Heart right ventricle (tissue), 16 donors: ENCODE measurements at regions of chr18 and their contacts with region 1.

Region 1: GRCh38 chr18:30465096-30465495 is 577.4 kb downstream of the DSC3 start:
- DNase-seq: no peak
- ATAC-seq: no peak
- H3K4me3 ChIP-seq: no peak overlapping the region
- H3K27ac ChIP-seq: no peak overlapping the region
- H3K4me1 ChIP-seq: no peaks in the 10 kb centered on the region
- H3K27me3 ChIP-seq: no peaks in the 10 kb centered on the region
- CTCF ChIP-seq: no peak

Region 2: DNA sequence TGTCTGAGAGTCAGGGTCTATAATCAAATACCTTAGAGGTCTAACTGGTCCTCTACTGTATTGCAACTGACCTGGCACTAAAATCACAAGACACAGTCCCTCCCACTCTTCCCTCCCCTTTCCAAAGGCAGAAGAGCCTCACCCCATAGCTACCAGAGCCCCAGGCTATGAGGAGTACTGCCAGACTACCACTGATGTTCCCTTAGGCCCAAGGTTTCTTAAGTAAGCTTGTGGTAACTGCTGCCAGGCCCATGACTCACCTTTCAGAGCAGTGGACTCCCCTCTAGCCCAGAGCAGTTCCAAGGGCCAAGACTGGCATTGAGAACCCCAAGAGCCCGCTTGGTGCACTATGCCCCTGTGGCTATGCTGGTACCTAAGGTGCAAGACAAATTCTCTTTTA is 616.0 kb before region 1 on chr18:
- intact Hi-C with region 1: no loop called
- DNase-seq: no peak
- ATAC-seq: no peak
- H3K4me3 ChIP-seq: no peak overlapping the region
- H3K27ac ChIP-seq: no peak overlapping the region
- H3K4me1 ChIP-seq: no peaks in the 10 kb centered on the region
- H3K27me3 ChIP-seq: no peaks in the 10 kb centered on the region
- CTCF ChIP-seq: no peak

Region 3: DNA sequence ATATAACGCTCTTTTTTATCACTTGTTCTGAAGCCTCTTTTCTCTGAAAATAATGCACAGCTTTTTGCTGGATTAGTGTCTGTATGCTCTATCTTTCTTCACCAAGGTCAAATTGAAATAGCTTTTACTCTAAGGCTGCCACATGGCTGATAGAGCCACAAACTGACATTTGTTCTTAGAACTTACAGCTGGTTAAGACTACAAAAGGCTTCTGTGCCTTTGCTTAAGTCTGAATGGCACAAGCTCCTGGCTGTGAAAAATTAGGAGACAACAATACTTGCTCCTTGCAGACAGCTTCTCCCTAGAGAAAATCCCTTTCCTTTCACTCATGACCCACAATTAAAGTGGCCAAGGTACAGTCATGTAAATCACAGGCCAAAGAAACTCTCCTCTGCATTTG is 62.1 kb after region 1 on chr18:
- intact Hi-C with region 1: loop called in 1 of 10 experiments (anchors 10 kb)
- DNase-seq: no peak
- ATAC-seq: no peak
- H3K4me3 ChIP-seq: no peak overlapping the region
- H3K27ac ChIP-seq: no peak overlapping the region
- H3K4me1 ChIP-seq: no peaks in the 10 kb centered on the region
- H3K27me3 ChIP-seq: no peaks in the 10 kb centered on the region
- CTCF ChIP-seq: no peak